Calu3 (cell line): ENCODE measurements at regions of chr6 and their contacts with region 1.

Region 1: GRCh38 chr6:158694913-158695312 is 45.1 kb downstream of the SYTL3 start:
- DNase-seq: no peak
- H3K4me3 Mint-ChIP-seq: no peak overlapping the region
- H3K27ac Mint-ChIP-seq: no peak overlapping the region
- H3K4me1 Mint-ChIP-seq: no peaks in the 10 kb centered on the region
- H3K27me3 Mint-ChIP-seq: no peaks in the 10 kb centered on the region
- CTCF ChIP-seq: no peak

Region 2: DNA sequence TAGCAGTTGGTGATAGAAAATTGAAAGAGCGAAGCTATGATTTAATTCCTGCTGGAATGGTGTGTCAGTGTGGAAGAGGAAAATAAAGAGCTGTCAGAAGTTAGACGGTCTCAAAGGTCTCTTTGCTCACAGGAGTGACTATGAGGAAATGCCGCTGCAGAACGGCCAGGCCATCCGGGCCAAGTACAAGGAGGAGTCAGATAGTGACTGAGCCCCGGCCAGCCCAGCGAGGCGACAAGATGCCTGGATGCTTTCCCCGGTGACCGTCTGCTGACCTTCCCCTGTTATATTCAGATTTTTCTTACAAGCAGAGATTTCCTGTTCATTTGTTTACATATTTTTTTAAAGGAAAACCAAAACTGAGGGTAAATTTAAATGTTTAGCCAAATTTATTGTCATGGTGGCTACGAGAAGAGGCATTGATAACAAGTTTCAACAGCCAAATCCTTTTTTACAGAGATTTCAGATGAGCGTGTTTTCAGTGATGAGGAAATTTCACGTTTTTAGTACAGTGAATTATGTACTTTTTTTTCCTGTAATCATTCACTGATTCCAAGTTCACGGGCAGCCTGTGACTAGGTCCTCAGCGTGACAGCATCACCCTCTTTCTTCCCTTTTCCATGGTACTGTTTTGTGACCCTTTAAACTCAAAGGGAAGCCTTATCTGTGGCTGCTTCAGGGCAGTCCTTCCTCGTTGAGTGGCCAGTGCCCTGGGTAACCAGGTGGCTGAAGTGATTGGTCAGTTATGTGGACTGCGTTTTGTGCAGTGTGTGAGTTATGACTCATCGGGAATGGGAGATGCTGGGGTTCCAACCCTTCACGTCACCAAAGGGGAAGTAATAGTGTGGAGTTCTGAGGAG is 63.0 kb before region 1 on chr6:
- CTCF ChIA-PET with region 1: interaction called, 3 read pairs
- intact Hi-C with region 1: loop called (anchors 5 kb)
- DNase-seq: peak; percentile 87
- H3K4me3 Mint-ChIP-seq: peak overlapping the region; percentile 22
- H3K27ac Mint-ChIP-seq: peak overlapping the region; percentile 69
- H3K4me1 Mint-ChIP-seq: peaks cover 19% of the 10 kb centered on the region
- H3K27me3 Mint-ChIP-seq: no peaks in the 10 kb centered on the region
- CTCF ChIP-seq: no peak